ENCODE measurements at regions of chr1 and their contacts with region 1.

Region 1: GRCh38 chr1:145906954-145907753 is 2.7 kb downstream of the ITGA10 start:
- DNase-seq: no peak
- H3K4me3 ChIP-seq: no peak overlapping the region
- H3K27me3 ChIP-seq: no peaks in the 10 kb centered on the region
- CTCF ChIP-seq: no peak

Region 2: GRCh38 chr1:145795257-145795881 is 111.8 kb before region 1 on chr1:
- CTCF ChIA-PET with region 1: no interaction called
- POLR2A ChIA-PET with region 1: no interaction called
- DNase-seq: no peak
- H3K4me3 ChIP-seq: no peak overlapping the region
- H3K27me3 ChIP-seq: no peaks in the 10 kb centered on the region
- CTCF ChIP-seq: no peak

Region 3: DNA sequence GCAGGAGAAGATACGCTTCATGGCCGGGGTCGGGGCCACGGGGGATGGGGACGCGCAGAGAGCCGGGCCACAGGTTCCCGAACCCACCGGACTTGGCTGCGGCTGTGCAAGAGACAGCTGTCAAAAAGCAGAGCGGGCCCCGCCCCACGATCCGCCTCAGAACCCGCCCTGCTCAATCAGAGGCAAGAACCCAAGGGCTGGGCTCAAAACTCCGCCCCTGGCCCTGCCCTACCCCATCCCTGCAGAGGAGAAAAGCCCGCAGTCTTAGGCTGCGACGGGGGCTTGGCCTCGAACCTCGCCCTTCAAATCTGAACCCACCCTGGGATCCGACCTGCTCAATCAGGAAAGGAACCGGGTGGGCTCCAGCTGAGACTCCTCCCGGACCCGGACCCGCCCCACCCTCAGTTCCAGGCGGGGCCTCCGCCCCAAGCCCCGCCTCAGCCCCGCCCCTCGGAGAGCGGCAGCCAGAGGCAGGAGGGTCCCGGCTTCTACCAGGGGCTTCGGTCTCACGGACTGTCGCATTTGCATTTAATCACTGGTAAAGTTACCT is 21.3 kb before region 1 on chr1 and contains the start of gene ANKRD35:
- CTCF ChIA-PET with region 1: interaction called, 193 read pairs
- POLR2A ChIA-PET with region 1: no interaction called
- DNase-seq: no peak
- H3K4me3 ChIP-seq: peak within 1 kb of the TSS; percentile 64
- H3K27me3 ChIP-seq: peaks cover 3% of the 10 kb centered on the region; the same call in 1 of the 2 replicates
- CTCF ChIP-seq: no peak
- polyA plus RNA-seq, gene ANKRD35: 1.4 and 1.5 TPM in 2 replicates

Region 4: GRCh38 chr1:145918144-145918992 is 11.2 kb after region 1 on chr1 and contains the start of gene PEX11B:
- CTCF ChIA-PET with region 1: interaction called, 12 read pairs
- POLR2A ChIA-PET with region 1: no interaction called
- DNase-seq: peak; percentile 43
- H3K4me3 ChIP-seq: peak within 1 kb of the TSS; percentile 61
- H3K27me3 ChIP-seq: no peaks in the 10 kb centered on the region
- CTCF ChIP-seq: no peak
- polyA plus RNA-seq, gene PEX11B: 34.9 and 46.4 TPM in 2 replicates

Region 5: GRCh38 chr1:145936247-145936646 is 29.1 kb after region 1 on chr1:
- CTCF ChIA-PET with region 1: no interaction called
- POLR2A ChIA-PET with region 1: no interaction called
- DNase-seq: no peak
- H3K4me3 ChIP-seq: no peak overlapping the region
- H3K27me3 ChIP-seq: no peaks in the 10 kb centered on the region
- CTCF ChIP-seq: no peak

Region 6: GRCh38 chr1:146019231-146020057 is 112.3 kb after region 1 on chr1:
- CTCF ChIA-PET with region 1: no interaction called
- POLR2A ChIA-PET with region 1: no interaction called
- DNase-seq: no peak
- H3K4me3 ChIP-seq: no peak overlapping the region
- H3K27me3 ChIP-seq: peaks cover 3% of the 10 kb centered on the region; the same call in 1 of the 2 replicates
- CTCF ChIP-seq: no peak